PC-3 (cell line): ENCODE measurements at regions of chr2 and their contacts with region 1.

Region 1: DNA sequence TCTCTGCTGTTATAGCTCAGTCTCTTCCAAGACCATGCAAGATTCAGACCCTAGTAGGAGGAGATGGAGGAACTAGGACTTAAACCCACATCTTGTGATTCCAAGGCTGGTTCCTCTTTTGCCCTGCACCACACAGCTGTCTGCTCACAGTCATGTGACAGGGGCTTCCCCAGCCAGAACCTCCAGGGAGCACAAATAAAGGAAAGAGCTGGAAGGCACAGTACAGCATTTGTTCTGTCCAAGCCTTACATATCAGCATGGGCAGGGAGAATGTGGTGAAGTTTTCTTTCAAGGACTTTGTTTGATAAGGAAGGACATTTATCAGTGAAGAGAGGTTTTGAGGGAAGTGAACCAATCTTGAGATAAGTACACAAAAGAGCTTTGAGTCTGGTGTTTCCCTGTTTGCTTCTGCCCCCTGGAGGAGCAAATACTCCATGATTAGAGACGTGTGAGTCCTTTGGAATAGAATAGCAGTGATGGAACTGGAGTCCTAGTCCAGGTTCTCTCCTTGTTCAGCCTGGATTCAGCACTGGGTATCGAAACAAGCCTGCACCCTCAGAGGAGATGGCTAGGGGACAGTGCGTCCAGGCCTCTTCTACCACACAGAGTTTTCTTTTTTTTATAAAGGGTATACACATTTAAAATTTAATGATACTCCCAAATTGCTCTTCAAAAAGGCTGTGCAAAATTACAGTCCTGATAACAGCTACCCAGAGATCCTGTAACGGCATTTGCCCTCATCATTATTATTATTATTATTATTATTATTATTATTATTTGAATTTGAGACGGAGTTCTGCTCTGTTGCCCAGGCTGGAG is 24.6 kb upstream of the CASP10 start:
- DNase-seq: peak; percentile 86
- ATAC-seq: peak; percentile 87
- H3K4me3 ChIP-seq: no peak overlapping the region
- H3K27ac ChIP-seq: peak overlapping the region; percentile 86
- H3K4me1 ChIP-seq: peaks cover 9% of the 10 kb centered on the region
- H3K27me3 ChIP-seq: no peaks in the 10 kb centered on the region
- CTCF ChIP-seq: peak; percentile 90

Region 2: DNA sequence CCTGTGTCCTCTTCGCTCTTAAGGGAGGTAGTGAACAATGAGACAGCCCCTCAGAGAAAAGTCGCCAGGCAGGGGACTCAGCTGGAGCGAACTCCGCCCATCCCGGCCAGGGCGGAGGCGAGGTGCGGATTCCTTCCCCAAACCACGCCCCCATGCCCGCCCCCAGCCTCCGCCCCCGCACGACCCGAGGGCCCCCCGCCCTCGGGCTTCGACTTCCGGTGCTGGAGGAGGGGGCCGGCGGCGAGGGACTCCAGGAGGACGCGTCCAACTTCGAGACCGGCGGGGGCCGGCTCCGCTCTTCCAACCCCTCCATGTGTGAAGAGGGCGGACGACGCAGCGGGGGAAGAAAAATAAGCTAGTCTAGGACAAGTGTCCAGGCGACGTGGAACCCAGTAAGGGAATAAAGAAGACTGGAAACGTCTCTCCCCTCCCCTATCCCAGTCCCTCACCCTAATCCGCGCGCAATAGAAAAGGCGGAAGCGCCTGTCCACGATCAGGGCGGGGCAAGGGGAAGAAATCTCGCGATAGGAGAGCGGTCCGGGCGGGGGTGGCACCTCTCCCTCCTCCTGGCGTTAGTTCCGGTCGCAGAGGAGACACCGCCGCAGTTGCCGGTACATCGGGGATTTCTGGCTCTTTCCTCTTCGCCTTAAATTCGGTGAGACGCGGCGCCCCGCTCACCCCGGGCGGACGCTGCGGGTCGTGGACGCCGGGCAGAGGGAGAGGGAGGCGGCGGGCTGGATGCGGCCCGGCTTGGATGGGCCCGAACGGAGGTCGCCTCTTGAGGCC is 346.8 kb before region 1 on chr2 and contains the start of gene BZW1:
- CTCF ChIA-PET with region 1: no interaction called
- POLR2A ChIA-PET with region 1: no interaction called
- intact Hi-C with region 1: no loop called
- DNase-seq: peak; percentile 97
- ATAC-seq: peak; percentile 76
- H3K4me3 ChIP-seq: peak within 1 kb of the TSS; percentile 84
- H3K27ac ChIP-seq: peak within 1 kb of the TSS; percentile 97
- H3K4me1 ChIP-seq: peaks cover 41% of the 10 kb centered on the region
- H3K27me3 ChIP-seq: no peaks in the 10 kb centered on the region
- CTCF ChIP-seq: no peak
- total RNA-seq, gene BZW1: 389 and 626 TPM in 2 replicates

Region 3: DNA sequence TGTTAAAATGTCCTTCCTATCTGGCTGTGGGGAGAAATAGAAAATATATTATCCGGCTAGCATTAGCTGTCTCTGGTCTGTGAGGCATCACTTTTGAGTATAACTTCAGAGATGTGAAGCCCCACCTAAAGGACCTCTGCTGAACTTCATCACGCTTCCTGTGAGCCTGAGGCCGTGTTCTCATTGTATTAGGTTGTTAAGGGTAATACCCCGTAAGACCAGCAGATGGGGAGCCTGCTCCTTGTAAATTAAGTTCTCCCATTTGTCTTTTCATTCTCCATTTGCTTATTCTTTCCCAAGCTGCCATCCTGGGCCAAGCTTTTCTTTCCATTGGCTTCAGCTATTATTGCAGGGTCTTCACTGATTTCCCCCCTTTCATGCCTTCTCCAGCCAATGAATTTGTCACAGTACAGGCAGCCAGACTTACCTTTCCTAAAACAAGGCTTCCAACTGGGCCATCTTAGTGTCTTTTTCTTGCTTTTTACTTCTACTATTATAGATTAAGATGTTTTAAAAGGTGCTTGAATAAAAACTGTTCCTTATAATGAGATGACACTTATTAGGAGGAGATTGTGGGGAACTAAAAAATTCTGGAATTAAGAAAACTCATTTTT is 256.8 kb before region 1 on chr2:
- CTCF ChIA-PET with region 1: interaction called, 4 read pairs
- POLR2A ChIA-PET with region 1: no interaction called
- intact Hi-C with region 1: loop called (anchors 5 kb)
- DNase-seq: peak; percentile 94
- ATAC-seq: peak; percentile 92
- H3K4me3 ChIP-seq: no peak overlapping the region
- H3K27ac ChIP-seq: no peak overlapping the region
- H3K4me1 ChIP-seq: no peaks in the 10 kb centered on the region
- H3K27me3 ChIP-seq: no peaks in the 10 kb centered on the region
- CTCF ChIP-seq: peak; percentile 86

Region 4: DNA sequence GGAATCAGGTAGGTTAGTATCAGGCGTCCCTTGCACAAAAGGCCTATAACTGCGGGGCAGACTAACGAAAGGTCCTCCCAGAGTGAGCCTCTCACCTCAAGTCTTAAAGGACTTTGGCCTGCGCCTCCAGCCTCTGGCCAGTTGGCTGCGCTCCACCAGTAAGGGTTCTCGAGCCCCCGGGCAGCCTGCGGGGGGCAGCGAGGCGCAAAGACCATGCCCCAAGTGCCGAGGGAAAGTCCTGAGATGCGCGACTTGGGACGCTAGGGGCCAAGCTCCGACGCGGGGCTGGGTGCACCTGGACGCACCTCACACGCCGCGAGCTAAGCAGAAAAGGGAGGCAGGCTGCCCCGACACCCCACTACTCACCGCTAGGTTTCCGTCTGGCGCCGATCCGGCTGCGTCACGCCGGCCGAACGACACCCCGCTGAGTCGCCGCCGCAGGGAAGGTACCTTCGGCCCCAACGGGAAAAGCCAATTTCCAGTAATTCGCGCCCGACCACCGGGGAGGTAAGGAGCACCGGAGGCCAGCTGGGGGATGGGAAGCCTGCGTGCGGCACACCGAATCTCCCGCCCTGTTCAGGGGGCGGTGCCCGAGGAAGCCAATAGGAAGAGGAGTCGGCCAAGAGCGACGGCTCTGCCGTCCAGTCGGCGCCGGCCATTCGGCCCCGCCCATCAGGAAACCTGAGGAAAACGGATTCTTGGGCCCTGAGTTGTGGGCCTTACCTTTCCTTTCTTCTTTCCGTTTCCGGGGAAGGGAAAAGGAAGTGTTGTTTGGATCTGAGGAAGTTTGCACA is 195.0 kb before region 1 on chr2 and contains the start of gene ORC2:
- CTCF ChIA-PET with region 1: no interaction called
- POLR2A ChIA-PET with region 1: no interaction called
- intact Hi-C with region 1: loop called (anchors 10 kb)
- DNase-seq: peak; percentile 99
- ATAC-seq: peak; percentile 93
- H3K4me3 ChIP-seq: peak within 1 kb of the TSS; percentile 81
- H3K27ac ChIP-seq: peak within 1 kb of the TSS; percentile 58
- H3K4me1 ChIP-seq: peaks cover 55% of the 10 kb centered on the region
- H3K27me3 ChIP-seq: no peaks in the 10 kb centered on the region
- CTCF ChIP-seq: peak; percentile 68
- total RNA-seq, gene ORC2: 17.7 and 25.9 TPM in 2 replicates

Region 5: GRCh38 chr2:201130524-201131186 is 27.7 kb before region 1 on chr2:
- CTCF ChIA-PET with region 1: no interaction called
- POLR2A ChIA-PET with region 1: no interaction called
- intact Hi-C with region 1: no loop called
- DNase-seq: peak; percentile 88
- ATAC-seq: peak; percentile 97
- H3K4me3 ChIP-seq: no peak overlapping the region
- H3K27ac ChIP-seq: peak overlapping the region; percentile 79
- H3K4me1 ChIP-seq: peaks cover 27% of the 10 kb centered on the region
- H3K27me3 ChIP-seq: no peaks in the 10 kb centered on the region
- CTCF ChIP-seq: no peak

Region 6: GRCh38 chr2:201194097-201194496 is 35.8 kb after region 1 on chr2:
- CTCF ChIA-PET with region 1: no interaction called
- POLR2A ChIA-PET with region 1: no interaction called
- intact Hi-C with region 1: no loop called
- DNase-seq: no peak
- ATAC-seq: no peak
- H3K4me3 ChIP-seq: no peak overlapping the region
- H3K27ac ChIP-seq: no peak overlapping the region
- H3K4me1 ChIP-seq: no peaks in the 10 kb centered on the region
- H3K27me3 ChIP-seq: no peaks in the 10 kb centered on the region
- CTCF ChIP-seq: no peak